IMR-90 (cell line): ENCODE measurements at regions of chr4 and their contacts with region 1.

Region 1: GRCh38 chr4:3037957-3038461 is 36.3 kb downstream of the HTT-AS start:
- DNase-seq: no peak
- ATAC-seq: no peak
- H3K4me3 ChIP-seq: no peak overlapping the region
- H3K27ac ChIP-seq: no peak overlapping the region
- H3K4me1 ChIP-seq: peaks cover 2% of the 10 kb centered on the region; the same call in 1 of the 2 replicates
- H3K27me3 ChIP-seq: peaks cover 25% of the 10 kb centered on the region
- CTCF ChIP-seq: no peak
- POLR2A ChIP-seq: no peak
- RAD21 ChIP-seq: no peak

Region 2: DNA sequence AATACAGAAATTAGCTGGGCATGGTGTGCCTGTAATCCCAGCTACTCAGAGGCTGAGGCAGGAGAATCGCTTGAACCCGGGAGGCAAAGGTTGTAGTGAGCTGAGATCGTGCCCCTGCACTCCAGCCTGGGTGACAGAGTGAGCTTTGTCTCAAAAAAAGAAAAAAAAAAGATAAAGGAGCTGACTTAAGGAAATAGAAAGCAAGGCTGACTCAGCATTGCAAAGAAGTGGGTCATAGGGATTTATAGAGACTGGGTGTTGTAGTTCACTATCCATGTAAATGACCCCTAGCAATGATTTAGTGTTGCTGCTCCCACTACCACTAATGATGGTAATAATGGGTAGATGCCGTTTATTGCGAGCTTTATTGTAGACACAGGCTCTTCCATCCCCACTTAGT is 146.7 kb before region 1 on chr4:
- CTCF ChIA-PET with region 1: no interaction called
- POLR2A ChIA-PET with region 1: no interaction called
- dilution Hi-C with region 1: no loop called
- in situ Hi-C with region 1: no loop called
- intact Hi-C with region 1: no loop called
- DNase-seq: peak; percentile 73
- ATAC-seq: peak; percentile 70
- H3K4me3 ChIP-seq: no peak overlapping the region
- H3K27ac ChIP-seq: no peak overlapping the region; the same call in 1 of the 2 replicates
- H3K4me1 ChIP-seq: peaks cover 7% of the 10 kb centered on the region
- H3K27me3 ChIP-seq: no peaks in the 10 kb centered on the region
- CTCF ChIP-seq: no peak
- POLR2A ChIP-seq: no peak
- RAD21 ChIP-seq: no peak

Region 3: GRCh38 chr4:2934813-2935761 is 102.9 kb before region 1 on chr4:
- CTCF ChIA-PET with region 1: no interaction called
- POLR2A ChIA-PET with region 1: no interaction called
- dilution Hi-C with region 1: no loop called
- in situ Hi-C with region 1: no loop called
- intact Hi-C with region 1: no loop called
- DNase-seq: peak; percentile 85
- ATAC-seq: peak; percentile 62
- H3K4me3 ChIP-seq: peak overlapping the region; percentile 95
- H3K27ac ChIP-seq: peak overlapping the region; percentile 94
- H3K4me1 ChIP-seq: peaks cover 16% of the 10 kb centered on the region
- H3K27me3 ChIP-seq: no peaks in the 10 kb centered on the region
- CTCF ChIP-seq: no peak
- POLR2A ChIP-seq: peak; percentile 90
- RAD21 ChIP-seq: no peak

Region 4: DNA sequence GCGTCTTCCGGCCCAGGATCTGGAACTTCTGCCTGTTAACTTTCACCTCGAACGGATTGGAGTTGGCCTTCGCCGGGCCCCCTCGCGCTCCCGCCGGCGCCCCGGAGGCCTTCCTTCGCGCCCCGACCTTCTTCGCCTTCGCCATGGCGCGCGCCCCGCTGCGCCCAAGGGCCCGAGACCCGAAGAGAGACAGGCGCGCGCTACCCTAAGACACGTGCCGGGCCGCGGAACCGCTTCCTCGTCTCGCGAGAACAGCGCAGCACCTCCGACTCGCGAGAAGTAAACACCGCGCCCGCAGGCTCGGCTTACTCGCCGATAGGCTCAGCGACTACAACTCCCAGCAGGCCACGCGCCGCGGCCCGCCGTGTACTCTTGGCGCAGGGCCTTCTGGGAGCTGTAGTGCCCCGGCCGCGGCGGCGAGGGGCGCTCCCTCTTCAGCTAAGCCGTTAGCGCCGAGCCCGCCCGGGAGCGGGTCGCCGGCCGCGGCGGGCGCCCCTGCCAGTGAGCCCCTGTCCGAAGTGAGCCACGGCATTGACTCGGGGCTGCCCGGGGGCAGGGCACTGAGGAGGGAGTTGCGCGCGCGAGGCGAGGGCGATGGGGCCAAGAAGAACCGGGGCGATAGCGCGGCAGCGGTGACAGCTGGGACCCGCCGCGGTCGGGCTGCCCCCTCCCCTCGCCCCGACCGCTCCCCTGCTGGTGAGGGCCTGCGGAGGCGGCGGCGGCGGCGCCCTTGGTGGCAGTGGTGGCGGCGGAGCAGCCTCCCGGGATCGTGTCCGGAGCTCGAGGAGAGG is 74.6 kb before region 1 on chr4 and contains the starts of genes GRK4 and NOP14:
- CTCF ChIA-PET with region 1: no interaction called
- POLR2A ChIA-PET with region 1: no interaction called
- dilution Hi-C with region 1: no loop called
- in situ Hi-C with region 1: no loop called
- intact Hi-C with region 1: loop called (anchors 1 kb)
- DNase-seq: peak; percentile 98
- ATAC-seq: peak; percentile 94
- H3K4me3 ChIP-seq: peak within 1 kb of the TSS; percentile 87
- H3K27ac ChIP-seq: peak within 1 kb of the TSS; percentile 72
- H3K4me1 ChIP-seq: peaks cover 13% of the 10 kb centered on the region
- H3K27me3 ChIP-seq: no peaks in the 10 kb centered on the region
- CTCF ChIP-seq: peak; percentile 41; the same call in 1 of the 2 replicates
- POLR2A ChIP-seq: peak; percentile 78
- RAD21 ChIP-seq: 0 out of 2 replicates have a peak, but pooled peaks have one; percentile 5
- total RNA-seq, gene GRK4: 1.6 and 1.7 TPM in 2 replicates
- total RNA-seq, gene NOP14: 10.9 and 19.2 TPM in 2 replicates

Region 5: GRCh38 chr4:3054169-3054759 is 16.3 kb after region 1 on chr4:
- CTCF ChIA-PET with region 1: no interaction called
- POLR2A ChIA-PET with region 1: no interaction called
- dilution Hi-C with region 1: no loop called
- in situ Hi-C with region 1: no loop called
- intact Hi-C with region 1: no loop called
- DNase-seq: no peak
- ATAC-seq: no peak
- H3K4me3 ChIP-seq: no peak overlapping the region
- H3K27ac ChIP-seq: no peak overlapping the region
- H3K4me1 ChIP-seq: no peaks in the 10 kb centered on the region
- H3K27me3 ChIP-seq: peaks cover 15% of the 10 kb centered on the region
- CTCF ChIP-seq: no peak
- POLR2A ChIP-seq: no peak
- RAD21 ChIP-seq: no peak

Region 6: GRCh38 chr4:3318561-3319021 is 280.6 kb after region 1 on chr4:
- CTCF ChIA-PET with region 1: no interaction called
- POLR2A ChIA-PET with region 1: no interaction called
- dilution Hi-C with region 1: no loop called
- in situ Hi-C with region 1: no loop called
- intact Hi-C with region 1: no loop called
- DNase-seq: no peak
- ATAC-seq: no peak
- H3K4me3 ChIP-seq: no peak overlapping the region
- H3K27ac ChIP-seq: no peak overlapping the region
- H3K4me1 ChIP-seq: peaks cover 3% of the 10 kb centered on the region; the same call in 1 of the 2 replicates
- H3K27me3 ChIP-seq: no peaks in the 10 kb centered on the region
- CTCF ChIP-seq: peak; percentile 15; the same call in 1 of the 2 replicates
- POLR2A ChIP-seq: no peak
- RAD21 ChIP-seq: no peak